Cardiac septum (tissue), 1 donor: ENCODE measurements at regions of chr12 and their contacts with region 1.

Region 1: DNA sequence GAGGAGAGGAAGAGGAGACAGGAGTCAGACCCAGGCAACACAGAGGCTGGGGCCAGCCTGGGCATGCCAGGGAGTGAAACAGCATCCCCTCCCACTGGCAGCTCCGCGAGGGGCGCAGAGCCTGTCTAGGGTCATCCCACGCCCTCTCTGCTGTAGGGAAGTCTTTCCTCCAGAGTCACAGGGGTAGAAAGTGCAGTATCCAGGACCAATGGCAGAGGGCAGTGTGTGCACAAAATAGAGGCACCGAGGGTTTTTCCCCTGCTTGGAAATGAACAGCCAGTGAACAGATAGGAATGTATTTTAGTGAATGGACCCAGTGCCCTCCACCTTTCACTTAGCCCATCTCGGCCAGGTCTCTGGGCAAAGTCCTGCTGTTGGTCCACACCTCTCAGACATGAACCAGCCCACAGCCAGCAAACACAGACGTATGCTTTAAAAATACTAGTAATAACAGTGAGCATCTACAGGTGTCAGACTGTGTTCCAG is 9.4 kb upstream of the KRT74 start:
- DNase-seq: peak; percentile 82

Region 2: DNA sequence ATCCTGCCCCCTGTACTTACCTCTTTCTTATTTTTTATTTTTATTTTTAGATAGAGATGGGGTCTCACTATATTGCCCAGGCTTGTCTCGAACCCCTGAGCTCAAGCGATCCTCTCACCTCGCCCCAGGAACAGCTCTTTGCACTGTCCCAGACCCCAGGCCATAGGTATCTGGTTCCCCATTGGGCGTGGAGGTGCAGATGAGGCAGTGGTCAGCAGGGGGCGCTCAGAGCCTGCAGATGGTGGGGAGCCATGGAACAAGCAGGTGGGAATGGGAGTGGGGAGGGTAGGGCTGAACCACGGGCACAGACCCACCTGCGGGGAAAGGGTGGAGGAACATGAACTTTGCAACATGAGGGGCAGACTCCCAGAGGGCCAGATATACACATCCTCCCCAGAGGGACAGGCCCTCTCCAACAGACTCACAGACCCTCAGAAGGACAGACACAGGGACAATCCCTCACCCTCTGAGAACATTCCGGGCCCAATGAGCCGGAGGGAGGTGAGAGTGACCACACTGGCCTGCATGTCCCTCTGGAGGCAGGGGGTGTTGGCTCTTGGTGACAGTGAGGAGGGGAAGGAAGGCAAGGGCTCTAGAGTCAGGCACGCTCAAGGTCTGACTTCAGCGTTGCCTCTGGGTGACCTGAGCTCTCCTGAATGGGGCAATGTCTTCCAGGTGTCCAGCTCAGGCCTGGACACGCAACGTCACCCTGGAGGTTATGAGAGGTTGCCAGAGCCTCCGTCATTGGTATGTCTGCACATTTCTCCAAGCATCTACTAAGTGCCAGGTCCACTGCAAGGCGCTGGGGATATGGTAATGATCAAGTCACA is 426.1 kb before region 1 on chr12:
- intact Hi-C with region 1: loop called (anchors 10 kb)
- DNase-seq: peak; percentile 90

Region 3: DNA sequence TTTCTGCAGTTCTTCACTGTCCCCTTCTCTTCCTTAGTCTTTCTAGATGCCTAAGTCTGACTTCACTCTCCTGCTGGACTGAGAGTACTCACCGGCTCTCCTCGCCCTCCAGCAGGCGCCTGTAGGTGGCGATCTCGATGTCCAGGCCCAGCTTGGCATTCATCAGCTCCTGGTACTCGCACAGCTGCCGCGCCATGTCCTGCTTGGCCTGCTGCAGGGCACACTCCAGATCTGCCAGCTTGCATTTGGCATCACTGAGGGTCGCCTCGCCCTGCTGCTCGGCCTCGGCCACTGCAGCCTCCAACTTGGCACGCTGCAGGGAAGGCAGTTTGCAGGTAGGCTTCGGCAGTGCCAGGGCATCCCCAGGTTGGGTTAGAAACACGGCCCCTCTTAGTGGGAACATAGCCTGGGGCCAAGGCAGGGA is 202.7 kb before region 1 on chr12:
- intact Hi-C with region 1: loop called (anchors 5 kb)
- DNase-seq: no peak

Region 4: DNA sequence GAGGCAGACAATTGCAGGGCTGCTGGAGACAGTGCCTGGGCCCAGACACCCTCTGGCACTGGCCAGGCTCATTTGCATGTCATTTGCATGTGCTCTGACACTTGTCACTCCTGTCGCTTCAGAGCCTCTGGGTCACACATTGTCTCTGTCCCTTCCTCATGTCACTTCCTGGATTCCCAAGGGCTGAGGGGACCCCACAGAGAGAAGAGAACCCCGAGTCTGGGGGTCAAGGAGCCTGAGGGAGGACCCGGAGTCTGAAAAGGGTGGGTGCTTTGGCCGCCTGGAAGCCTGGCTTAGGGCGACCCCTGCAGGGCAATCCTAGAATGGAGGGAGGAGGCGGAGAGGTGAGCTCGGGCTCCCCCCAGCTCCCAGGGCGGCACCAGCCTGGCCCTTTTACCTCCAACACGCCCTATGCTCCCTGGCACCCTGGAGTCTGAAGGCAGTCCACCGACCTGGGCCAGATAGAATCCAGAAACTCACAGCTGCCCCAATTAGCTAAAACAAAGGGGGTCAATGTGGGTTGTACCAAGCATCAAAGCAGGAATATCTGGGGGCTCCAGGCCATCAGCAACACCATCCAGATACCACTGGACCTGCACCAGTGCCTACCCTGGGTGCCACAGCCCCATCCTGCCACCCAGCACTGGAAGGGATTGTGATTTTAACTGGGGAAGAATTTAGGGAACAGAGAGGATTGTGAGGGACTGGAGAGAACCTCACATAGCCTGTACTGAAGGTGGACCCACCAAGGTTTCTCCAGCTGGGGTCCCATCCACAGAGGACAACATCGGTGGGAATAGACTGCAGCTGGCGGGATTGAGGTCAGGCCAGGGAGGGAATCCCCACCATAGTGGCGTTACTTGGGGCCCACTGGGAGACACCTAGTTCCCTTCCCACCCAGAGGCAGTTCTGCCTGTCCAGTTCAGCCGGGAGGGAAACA is 287.6 kb after region 1 on chr12:
- intact Hi-C with region 1: loop called (anchors 2 kb)
- DNase-seq: no peak

Region 5: GRCh38 chr12:52879394-52880351 is 296.7 kb after region 1 on chr12:
- intact Hi-C with region 1: loop called (anchors 1 kb)
- DNase-seq: peak; percentile 86

Region 6: DNA sequence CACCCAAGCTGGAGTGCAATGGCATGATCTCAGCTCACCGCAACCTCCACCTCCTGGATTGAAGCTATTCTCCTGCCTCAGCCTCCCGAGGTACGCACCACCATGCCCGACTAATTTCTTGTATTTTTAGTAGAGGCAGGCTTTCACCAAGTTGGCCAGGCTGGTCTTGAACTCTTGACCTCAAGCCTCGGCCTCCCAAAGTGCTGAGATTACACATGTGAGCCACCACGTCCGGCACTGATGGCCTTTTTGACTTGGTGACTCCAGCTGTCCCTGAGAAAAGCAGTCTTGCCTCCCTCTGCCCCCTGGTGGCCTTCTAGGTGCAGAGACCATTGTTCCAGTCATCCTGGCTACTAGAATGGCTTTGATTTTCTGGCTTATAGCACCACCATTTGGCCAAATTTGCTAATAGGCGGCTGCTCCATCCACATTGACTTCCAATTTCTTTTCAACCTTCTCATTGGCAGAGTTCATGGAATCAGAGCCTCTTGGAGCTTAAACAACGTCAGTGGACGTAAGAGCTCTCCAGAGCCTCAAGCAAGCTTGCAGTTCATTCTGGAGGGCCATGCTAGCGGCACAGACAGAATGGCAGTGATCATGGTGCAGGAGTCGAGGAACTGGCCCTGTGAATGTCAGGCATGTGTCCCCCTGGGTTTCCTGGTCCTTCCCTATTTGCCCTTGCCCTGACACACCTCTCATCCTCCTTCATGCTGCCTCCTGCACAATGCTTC is 397.8 kb after region 1 on chr12:
- intact Hi-C with region 1: loop called (anchors 5 kb)
- DNase-seq: peak; percentile 88